ENCODE measurements at regions of chr2 and their contacts with region 1.

Region 1: GRCh38 chr2:147082850-147083522 is 761.8 kb upstream of the ACVR2A start:
- DNase-seq: peak; percentile 27
- CTCF ChIP-seq: peak; percentile 86

Region 2: DNA sequence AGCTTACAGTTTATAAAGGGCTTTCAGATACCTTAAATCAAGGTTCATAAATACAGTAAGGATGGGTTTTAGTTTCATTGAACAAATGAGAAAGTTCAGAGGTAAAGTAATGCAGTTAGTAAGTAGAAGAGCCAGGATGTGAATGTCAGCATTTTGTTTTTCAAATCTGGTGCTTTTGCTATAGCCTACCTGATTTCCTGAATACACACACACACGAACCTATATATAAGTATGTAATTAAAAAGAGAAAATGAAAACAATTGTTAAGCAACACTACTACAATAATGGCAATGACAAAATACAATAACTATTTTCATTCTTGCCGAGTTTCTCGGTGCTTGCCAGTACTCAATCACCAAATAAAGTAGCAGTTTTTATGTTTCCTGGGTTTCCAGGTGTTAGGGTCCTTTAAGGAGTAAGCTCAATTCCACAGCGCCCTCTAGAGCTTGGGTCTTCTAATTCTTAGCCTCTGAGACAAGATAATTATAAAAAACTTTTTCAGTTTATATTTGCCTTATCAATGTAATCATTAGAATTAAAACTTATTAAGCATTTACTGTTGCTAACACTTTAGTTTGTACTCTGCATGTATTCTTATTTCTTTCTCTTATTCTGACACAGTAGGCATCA is 248.9 kb after region 1 on chr2:
- in situ Hi-C with region 1: loop called (anchors 25 kb)
- DNase-seq: peak; percentile 19
- CTCF ChIP-seq: peak; percentile 55

Region 3: DNA sequence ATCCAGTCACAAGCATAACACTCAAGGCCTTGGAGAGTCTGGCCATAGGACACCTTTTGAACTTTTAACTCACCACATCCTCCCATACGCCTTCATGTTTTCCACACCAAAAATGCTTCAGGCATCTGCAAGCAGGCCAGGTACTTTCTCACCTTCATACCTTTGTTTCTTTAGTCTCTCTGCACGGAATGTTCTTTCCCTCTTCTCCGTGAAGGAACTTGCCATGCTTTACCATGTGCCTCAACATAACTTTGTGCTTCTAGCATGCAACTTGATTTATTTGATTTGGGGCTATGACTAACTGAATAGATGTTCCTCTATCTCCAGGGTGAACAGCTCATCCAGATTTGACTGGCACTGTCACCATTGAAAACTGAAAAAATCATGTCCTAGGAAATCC is 620.2 kb after region 1 on chr2:
- in situ Hi-C with region 1: no loop called
- DNase-seq: no peak
- CTCF ChIP-seq: no peak

Measured in GM13977 (cell line).